Panc1 (cell line): ENCODE measurements at regions of chr11 and their contacts with region 1.

Region 1: GRCh38 chr11:36292311-36292722 is 3.1 kb upstream of the COMMD9 start:
- DNase-seq: no peak
- ATAC-seq: no peak
- H3K4me3 ChIP-seq: no peak overlapping the region
- H3K27ac ChIP-seq: no peak overlapping the region
- H3K4me1 ChIP-seq: no peaks in the 10 kb centered on the region; the same call in 1 of the 2 replicates
- H3K27me3 ChIP-seq: no peaks in the 10 kb centered on the region
- CTCF ChIP-seq: peak; percentile 58

Region 2: DNA sequence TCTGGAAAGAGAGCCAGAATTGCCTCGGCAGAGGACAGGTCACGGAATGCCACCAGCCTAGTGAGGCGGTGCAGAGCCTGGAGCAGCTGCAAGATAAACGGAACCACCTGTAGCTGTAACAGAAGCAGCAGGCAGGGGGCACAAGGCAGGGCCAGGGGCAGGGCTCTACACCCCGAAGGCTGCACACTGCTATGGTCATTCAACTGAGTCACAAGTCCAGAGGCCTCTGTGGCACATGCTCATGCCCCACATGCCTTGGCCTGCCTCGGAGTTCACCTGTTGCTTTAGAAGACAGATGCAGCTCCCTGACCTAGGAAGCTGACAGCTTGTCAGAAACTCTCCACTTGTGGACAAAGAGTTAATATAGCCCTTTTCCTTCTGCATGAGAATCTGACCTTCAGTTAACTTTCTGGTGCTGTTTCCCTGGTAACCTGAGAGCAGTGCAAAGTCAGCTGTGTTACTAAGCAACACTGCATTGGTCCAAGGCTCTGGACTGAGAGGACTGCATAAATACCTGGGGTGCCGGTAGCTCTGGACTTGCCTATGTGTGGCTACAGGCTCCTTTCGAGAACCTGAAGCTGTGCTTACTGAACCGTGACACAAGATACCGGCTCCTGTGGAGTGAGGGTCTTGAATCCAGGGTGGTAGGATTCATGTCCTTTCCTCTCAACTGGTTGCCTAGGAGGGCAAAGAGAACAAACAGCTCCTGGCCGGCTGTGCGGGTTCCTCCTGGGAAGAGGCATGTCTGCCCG is 13.6 kb before region 1 on chr11:
- CTCF ChIA-PET with region 1: no interaction called
- POLR2A ChIA-PET with region 1: no interaction called
- in situ Hi-C with region 1: no loop called
- intact Hi-C with region 1: no loop called
- DNase-seq: no peak
- ATAC-seq: no peak
- H3K4me3 ChIP-seq: no peak overlapping the region
- H3K27ac ChIP-seq: no peak overlapping the region
- H3K4me1 ChIP-seq: no peaks in the 10 kb centered on the region
- H3K27me3 ChIP-seq: no peaks in the 10 kb centered on the region
- CTCF ChIP-seq: no peak

Region 3: DNA sequence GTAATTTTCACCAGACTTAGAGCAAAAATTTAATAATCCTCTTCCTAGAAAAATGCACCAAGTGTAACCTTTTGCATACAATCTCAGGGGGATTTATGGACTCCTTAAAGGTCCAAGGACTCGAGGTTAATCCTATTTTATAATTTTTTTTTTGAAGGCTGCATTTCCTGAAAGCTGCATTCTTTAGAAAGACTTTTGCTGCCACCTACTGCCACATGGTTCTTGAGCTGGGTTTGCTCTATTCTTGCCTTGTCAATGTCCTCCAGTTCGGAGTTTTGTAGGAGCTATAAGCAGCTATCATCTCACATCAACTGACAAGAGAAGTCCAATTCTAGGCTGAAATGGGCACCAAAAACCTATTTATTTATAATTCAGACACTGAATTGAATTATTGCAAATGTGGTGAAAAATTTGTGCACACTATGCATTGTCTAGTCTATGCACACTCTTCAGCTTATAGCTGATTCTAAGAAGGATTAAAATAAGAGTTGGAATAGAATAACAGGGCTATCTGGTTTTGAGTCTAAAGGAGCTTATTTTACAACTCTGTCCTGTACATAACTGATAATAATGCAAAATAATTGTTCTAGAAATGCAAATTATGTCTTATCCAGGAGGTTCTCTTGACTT is 186.5 kb after region 1 on chr11:
- CTCF ChIA-PET with region 1: interaction called, 11 read pairs
- POLR2A ChIA-PET with region 1: no interaction called
- in situ Hi-C with region 1: no loop called
- intact Hi-C with region 1: loop called (anchors 5 kb)
- DNase-seq: peak; percentile 28
- ATAC-seq: peak; percentile 84
- H3K4me3 ChIP-seq: no peak overlapping the region
- H3K27ac ChIP-seq: no peak overlapping the region
- H3K4me1 ChIP-seq: no peaks in the 10 kb centered on the region
- H3K27me3 ChIP-seq: no peaks in the 10 kb centered on the region
- CTCF ChIP-seq: peak; percentile 67

Region 4: GRCh38 chr11:36492724-36493304 is 200.5 kb after region 1 on chr11:
- CTCF ChIA-PET with region 1: interaction called, 16 read pairs
- POLR2A ChIA-PET with region 1: no interaction called
- in situ Hi-C with region 1: no loop called
- intact Hi-C with region 1: loop called (anchors 5 kb)
- DNase-seq: peak; percentile 42
- ATAC-seq: peak; percentile 86
- H3K4me3 ChIP-seq: no peak overlapping the region
- H3K27ac ChIP-seq: no peak overlapping the region
- H3K4me1 ChIP-seq: no peaks in the 10 kb centered on the region
- H3K27me3 ChIP-seq: no peaks in the 10 kb centered on the region
- CTCF ChIP-seq: peak; percentile 86

Region 5: DNA sequence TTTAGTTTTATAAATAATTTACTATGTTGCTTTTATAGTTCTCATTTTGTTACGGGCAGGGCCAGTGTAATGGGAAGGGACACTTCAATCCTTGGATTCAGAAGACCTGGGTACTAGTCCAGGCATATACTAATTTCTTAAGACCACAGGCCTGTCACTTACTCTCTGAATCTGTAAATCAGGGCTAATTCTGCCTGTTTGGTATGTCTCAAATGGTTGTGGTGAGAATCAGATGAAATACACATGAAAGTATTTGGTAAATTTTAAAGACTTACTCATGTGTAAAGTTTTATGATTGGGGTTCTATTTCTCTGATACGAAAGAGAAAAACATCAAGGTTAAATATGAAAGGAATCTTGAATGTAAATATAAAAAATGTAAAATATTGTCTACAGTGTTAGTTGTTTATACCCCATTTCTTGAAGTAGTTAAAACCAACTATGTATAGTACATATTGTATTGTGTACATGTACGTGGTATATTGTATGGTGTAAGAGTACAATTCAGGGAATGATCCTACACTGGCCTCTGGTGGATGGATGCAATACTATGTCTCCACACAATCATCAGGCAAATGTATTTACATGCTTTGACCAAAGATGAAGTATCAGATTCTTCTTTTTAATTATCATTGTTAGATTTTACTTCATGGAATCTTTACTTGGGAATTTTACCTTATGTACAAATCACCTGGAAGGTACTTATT is 330.3 kb after region 1 on chr11:
- CTCF ChIA-PET with region 1: no interaction called
- POLR2A ChIA-PET with region 1: no interaction called
- in situ Hi-C with region 1: no loop called
- intact Hi-C with region 1: no loop called
- DNase-seq: peak; percentile 7
- ATAC-seq: peak; percentile 95
- H3K4me3 ChIP-seq: no peak overlapping the region
- H3K27ac ChIP-seq: peak overlapping the region; percentile 36; the same call in 1 of the 2 replicates
- H3K4me1 ChIP-seq: peaks cover 3% of the 10 kb centered on the region; the same call in 1 of the 2 replicates
- H3K27me3 ChIP-seq: no peaks in the 10 kb centered on the region
- CTCF ChIP-seq: peak; percentile 70; the same call in 1 of the 2 replicates